Activated B cell treated with CpG ODN at 0.5 μM for 24 hours (primary cell): ENCODE measurements at regions of chr17 and their contacts with region 1.

Region 1: GRCh38 chr17:3907483-3908216 is 8.6 kb downstream of the P2RX1 start:
- DNase-seq: no peak
- ATAC-seq: no peak
- H3K4me3 Mint-ChIP-seq: no peak overlapping the region
- H3K27ac Mint-ChIP-seq: peak overlapping the region; percentile 64
- H3K4me1 Mint-ChIP-seq: peaks cover 65% of the 10 kb centered on the region
- H3K27me3 Mint-ChIP-seq: no peaks in the 10 kb centered on the region
- CTCF ChIP-seq: no peak

Region 2: DNA sequence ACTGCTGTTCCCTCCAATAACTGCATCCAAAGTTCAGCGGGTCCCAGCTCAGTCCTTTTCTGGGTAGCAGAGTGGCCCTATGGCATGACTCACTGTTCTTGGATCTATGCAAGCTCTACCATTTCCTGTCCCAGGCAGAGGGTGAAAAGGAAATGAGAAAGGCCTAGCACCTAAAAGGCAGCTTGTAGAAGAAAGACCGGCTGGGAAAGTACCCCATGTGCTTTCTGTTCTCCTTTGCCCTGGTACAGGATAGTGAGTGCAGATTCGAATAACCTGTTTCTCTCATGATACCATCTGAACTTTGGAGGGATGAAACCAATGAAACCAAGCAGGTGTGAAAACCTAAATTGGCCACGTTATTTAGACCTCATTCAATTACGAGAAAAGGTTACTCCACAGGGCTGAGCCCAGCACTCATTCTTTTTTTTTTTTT is 196.7 kb before region 1 on chr17:
- CTCF ChIA-PET with region 1: no interaction called
- POLR2A ChIA-PET with region 1: no interaction called
- intact Hi-C with region 1: no loop called
- DNase-seq: no peak
- ATAC-seq: peak; percentile 93
- H3K4me3 Mint-ChIP-seq: peak overlapping the region; percentile 80
- H3K27ac Mint-ChIP-seq: peak overlapping the region; percentile 95
- H3K4me1 Mint-ChIP-seq: peaks cover 69% of the 10 kb centered on the region
- H3K27me3 Mint-ChIP-seq: no peaks in the 10 kb centered on the region
- CTCF ChIP-seq: no peak

Region 3: DNA sequence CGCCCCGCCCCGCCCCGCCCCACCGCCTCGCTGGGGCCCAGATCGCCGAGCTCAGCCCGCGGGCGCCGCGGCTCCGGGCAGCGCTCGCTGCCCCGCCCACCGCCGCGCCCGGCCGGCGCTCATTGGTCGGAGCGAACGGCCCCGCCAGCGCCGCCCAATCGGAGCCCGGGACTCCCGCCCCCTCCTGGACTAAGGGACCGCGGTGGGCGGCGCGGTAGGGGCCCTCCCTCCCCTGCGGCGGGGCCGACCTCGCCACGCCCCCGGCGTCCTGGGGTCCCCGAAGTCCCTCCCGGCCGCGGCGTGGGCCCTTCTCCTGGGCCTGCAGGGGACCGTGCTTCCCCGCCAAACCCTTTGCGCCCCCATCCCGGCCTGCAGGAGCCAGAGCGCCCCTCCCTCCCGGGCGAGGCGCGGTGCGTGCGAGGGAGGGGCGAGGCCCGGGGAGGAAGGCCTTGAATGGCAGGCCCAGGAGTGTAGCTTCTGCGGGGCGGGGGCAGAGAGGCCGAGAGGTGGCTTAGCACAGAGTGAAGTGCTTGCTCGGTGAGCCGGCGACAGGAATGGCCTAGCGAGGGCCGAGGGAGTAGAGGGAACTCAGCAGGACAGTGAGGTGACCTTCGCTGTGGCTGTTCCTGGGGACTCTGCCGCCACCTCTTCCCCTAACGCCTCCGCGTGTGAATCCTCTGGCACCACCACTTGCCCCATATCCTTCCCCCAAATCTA is 14.5 kb before region 1 on chr17 and contains the start of gene CAMKK1:
- CTCF ChIA-PET with region 1: interaction called, 3 read pairs
- POLR2A ChIA-PET with region 1: interaction called, 43 read pairs
- intact Hi-C with region 1: loop called (anchors 1 kb)
- DNase-seq: peak; percentile 93
- ATAC-seq: peak; percentile 88
- H3K4me3 Mint-ChIP-seq: peak within 1 kb of the TSS; percentile 81
- H3K27ac Mint-ChIP-seq: peak within 1 kb of the TSS; percentile 77
- H3K4me1 Mint-ChIP-seq: peaks cover 38% of the 10 kb centered on the region
- H3K27me3 Mint-ChIP-seq: no peaks in the 10 kb centered on the region
- CTCF ChIP-seq: no peak
- total RNA-seq, gene CAMKK1: 4.3 and 6.1 TPM in 2 replicates

Region 4: DNA sequence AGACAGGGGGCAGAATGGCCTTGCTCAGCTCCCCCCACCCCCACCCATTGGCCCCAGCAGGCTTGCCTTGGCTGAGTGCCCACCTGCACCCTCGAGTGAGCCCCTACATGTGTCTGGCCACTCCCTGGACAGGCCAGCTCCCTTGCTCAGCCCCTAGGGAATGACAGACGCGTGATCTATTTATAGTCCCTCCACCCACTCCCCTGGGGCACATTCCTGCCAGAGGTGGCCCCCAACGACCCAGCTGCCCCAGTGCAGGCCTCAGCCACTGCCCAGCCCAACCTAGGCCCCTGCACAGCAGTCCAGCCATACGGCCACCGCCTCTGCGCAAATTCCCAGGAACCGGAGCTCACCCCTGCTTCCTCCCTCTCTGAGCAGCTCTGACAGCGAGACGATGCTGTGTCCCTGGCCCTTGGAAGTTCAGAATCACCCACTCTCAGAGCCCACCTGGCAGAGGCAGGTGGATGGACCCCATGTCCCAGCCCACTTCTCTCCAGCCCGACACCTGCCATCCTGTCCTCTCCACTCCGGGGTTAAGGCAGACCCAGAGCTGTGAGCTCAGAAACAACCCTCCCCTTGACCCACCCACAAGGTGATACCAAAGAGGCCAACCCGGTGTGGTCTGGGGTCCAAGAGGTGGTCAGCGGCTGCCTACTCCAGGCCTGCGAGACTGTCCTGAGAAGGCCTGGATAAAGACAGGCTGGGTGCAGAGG is 20.1 kb after region 1 on chr17:
- CTCF ChIA-PET with region 1: no interaction called
- POLR2A ChIA-PET with region 1: interaction called, 18 read pairs
- intact Hi-C with region 1: no loop called
- DNase-seq: no peak
- ATAC-seq: no peak
- H3K4me3 Mint-ChIP-seq: no peak overlapping the region
- H3K27ac Mint-ChIP-seq: peak overlapping the region; percentile 76
- H3K4me1 Mint-ChIP-seq: peaks cover 17% of the 10 kb centered on the region
- H3K27me3 Mint-ChIP-seq: no peaks in the 10 kb centered on the region
- CTCF ChIP-seq: no peak

Region 5: GRCh38 chr17:4872786-4873185 is 965.1 kb after region 1 on chr17:
- CTCF ChIA-PET with region 1: no interaction called
- POLR2A ChIA-PET with region 1: no interaction called
- intact Hi-C with region 1: no loop called
- DNase-seq: no peak
- ATAC-seq: no peak
- H3K4me3 Mint-ChIP-seq: no peak overlapping the region
- H3K27ac Mint-ChIP-seq: no peak overlapping the region
- H3K4me1 Mint-ChIP-seq: no peaks in the 10 kb centered on the region
- H3K27me3 Mint-ChIP-seq: no peaks in the 10 kb centered on the region
- CTCF ChIP-seq: no peak